CD8-positive, alpha-beta T cell (primary cell): ENCODE measurements at regions of chr16 and their contacts with region 1.

Region 1: DNA sequence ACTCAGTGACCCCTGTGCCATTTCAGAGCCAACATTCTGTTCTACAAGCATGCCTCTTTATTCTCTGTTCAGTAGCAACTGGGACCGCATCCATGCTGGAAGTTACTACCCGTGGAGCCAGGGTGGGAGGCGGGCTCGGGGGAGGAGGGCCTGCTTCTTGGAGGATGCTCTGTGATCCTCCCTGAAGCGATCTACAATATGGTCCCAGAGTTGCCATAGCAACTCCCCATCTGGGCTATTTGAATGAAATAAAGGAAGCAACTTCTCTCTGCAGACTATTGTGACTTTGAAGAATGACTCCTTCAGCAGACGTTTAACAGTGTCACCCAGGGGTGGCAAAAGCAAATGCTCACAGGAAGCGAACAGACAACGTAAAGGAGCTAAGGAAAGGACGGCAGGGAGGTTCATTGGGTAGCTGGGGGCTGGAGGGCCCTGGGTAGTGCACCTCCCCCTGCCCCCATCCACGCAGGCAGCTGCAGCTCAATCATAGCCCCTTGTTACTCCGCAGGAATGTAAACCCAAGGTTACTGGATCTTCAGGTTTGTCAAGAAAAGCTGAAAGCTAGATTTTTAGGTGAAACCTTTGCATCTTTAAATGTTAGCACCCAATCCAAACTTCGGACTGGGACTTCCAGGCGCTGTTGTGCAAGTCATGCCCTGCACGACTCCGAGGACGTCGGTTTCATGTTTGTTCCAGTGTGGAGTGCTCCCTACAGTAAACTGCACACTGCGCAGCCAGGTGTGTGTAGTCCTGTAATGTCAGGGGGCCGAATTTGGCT is 51.1 kb upstream of the MEAK7 start:
- DNase-seq: peak in 2 of 9 experiments; percentile 12 to 48
- ATAC-seq: no peak
- H3K4me3 ChIP-seq: no peak overlapping the region
- H3K4me3 Mint-ChIP-seq: no peak overlapping the region
- H3K27ac ChIP-seq: peak overlapping the region in 1 of 2 experiments; percentile 63
- H3K27ac Mint-ChIP-seq: no peak overlapping the region
- H3K4me1 ChIP-seq: peaks cover 41% of the 10 kb centered on the region
- H3K4me1 Mint-ChIP-seq: peaks cover 41% of the 10 kb centered on the region
- H3K27me3 ChIP-seq: no peaks in the 10 kb centered on the region
- H3K27me3 Mint-ChIP-seq: no peaks in the 10 kb centered on the region
- CTCF ChIP-seq: no peak

Region 2: GRCh38 chr16:84368308-84368996 is 187.2 kb before region 1 on chr16 and contains the start of gene ATP2C2:
- CTCF ChIA-PET with region 1: no interaction called
- POLR2A ChIA-PET with region 1: no interaction called
- intact Hi-C with region 1: no loop called
- DNase-seq: no peak
- ATAC-seq: no peak
- H3K4me3 ChIP-seq: no peak within 1 kb of the TSS
- H3K4me3 Mint-ChIP-seq: no peak within 1 kb of the TSS
- H3K27ac ChIP-seq: no peak within 1 kb of the TSS
- H3K27ac Mint-ChIP-seq: no peak within 1 kb of the TSS
- H3K4me1 ChIP-seq: peaks cover 11% of the 10 kb centered on the region
- H3K4me1 Mint-ChIP-seq: peaks cover 5% of the 10 kb centered on the region
- H3K27me3 ChIP-seq: peaks cover 0 to 8% of the 10 kb centered on the region in 2 experiments
- H3K27me3 Mint-ChIP-seq: peaks cover 49% of the 10 kb centered on the region
- CTCF ChIP-seq: no peak
- total RNA-seq, gene ATP2C2: not detected

Region 3: DNA sequence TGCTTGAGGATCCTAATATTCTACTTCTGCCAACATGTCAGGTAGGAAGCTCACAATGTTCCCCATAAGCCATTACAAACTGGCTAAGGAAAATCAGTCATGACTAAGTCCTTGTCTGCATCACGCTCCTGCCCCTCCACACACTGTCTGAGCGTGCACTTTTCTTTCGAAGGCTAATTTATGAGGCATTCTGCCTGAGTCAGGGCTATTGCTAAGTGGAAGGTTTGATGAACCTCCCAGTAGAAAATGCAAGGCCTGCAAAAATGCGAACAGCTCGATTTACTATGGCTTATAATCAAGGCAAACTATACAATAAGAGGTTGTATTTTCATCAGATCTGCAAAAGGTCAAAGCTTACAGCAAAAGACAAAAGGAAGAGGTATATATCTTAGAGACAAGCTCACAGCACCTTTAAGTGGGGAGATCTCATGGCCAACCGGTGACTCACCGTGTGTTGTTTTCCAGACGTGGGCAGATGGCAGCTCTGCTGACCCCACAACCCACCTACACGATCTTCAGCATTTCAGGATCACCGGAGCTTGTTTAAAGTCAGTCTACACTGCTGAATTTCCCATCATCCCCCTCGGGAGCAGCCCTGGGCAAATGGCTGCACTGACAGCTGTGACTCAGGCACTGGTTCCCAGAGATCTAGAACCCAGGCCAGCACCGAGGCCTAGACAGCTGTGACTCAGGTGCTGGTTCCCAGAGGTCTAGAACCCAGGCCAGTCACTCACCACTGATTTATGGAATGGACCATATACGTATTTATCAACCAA is 77.2 kb before region 1 on chr16:
- CTCF ChIA-PET with region 1: no interaction called
- POLR2A ChIA-PET with region 1: no interaction called
- intact Hi-C with region 1: no loop called
- DNase-seq: peak in 1 of 9 experiments; percentile 29
- ATAC-seq: no peak
- H3K4me3 ChIP-seq: no peak overlapping the region
- H3K4me3 Mint-ChIP-seq: no peak overlapping the region
- H3K27ac ChIP-seq: no peak overlapping the region
- H3K27ac Mint-ChIP-seq: no peak overlapping the region
- H3K4me1 ChIP-seq: no peaks in the 10 kb centered on the region
- H3K4me1 Mint-ChIP-seq: peaks cover 2% of the 10 kb centered on the region
- H3K27me3 ChIP-seq: no peaks in the 10 kb centered on the region
- H3K27me3 Mint-ChIP-seq: no peaks in the 10 kb centered on the region
- CTCF ChIP-seq: no peak

Region 4: GRCh38 chr16:84593825-84594724 is 38.5 kb after region 1 on chr16:
- CTCF ChIA-PET with region 1: interaction called, 4 read pairs
- POLR2A ChIA-PET with region 1: interaction called, 8 read pairs
- intact Hi-C with region 1: loop called in 1 of 2 experiments (anchors 5 kb)
- DNase-seq: peak; percentile 69 to 98 (median 84)
- ATAC-seq: peak; percentile 85
- H3K4me3 ChIP-seq: peak overlapping the region; percentile 37 to 46
- H3K4me3 Mint-ChIP-seq: peak overlapping the region; percentile 83
- H3K27ac ChIP-seq: peak overlapping the region; percentile 75 to 94
- H3K27ac Mint-ChIP-seq: peak overlapping the region; percentile 98
- H3K4me1 ChIP-seq: peaks cover 59% of the 10 kb centered on the region
- H3K4me1 Mint-ChIP-seq: peaks cover 72% of the 10 kb centered on the region
- H3K27me3 ChIP-seq: no peaks in the 10 kb centered on the region
- H3K27me3 Mint-ChIP-seq: no peaks in the 10 kb centered on the region
- CTCF ChIP-seq: no peak

Region 5: DNA sequence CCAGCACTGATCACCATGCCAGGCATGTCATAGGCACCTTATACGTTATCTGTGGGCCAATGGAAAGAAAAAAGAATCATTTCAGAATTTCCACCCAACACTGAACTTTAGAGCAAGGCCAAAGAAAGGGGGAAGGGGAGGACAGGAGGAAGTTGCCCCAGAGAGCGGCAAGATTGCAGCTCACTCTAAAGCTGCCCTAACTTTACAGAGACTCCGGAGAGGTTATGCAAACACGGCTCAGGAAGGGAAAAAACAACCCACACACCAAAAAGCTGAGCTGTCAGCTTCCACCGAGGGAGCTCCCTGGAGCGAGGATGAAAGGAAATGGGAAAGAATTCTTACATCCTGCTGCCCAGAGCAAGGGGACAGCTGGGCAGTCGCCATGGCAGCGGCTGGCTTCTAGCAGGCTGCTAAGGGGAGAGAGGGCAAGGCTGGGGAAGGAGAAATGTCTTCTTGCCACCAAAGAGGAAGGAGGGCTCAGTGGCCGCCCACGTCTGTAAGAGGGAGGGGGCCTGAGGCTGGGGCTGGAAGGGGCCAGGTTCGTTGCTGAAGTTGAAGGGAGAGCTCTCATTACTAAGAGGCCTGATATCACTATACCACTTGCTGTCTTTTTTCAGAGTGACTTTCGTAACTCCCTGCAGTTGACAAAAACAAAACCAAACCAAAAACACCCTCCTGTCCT is 44.1 kb after region 1 on chr16:
- CTCF ChIA-PET with region 1: interaction called, 4 read pairs
- POLR2A ChIA-PET with region 1: interaction called, 8 read pairs
- intact Hi-C with region 1: loop called (anchors 2 to 5 kb)
- DNase-seq: peak in 6 of 9 experiments; percentile 51 to 77 (median 62)
- ATAC-seq: peak; percentile 23
- H3K4me3 ChIP-seq: peak overlapping the region; percentile 39
- H3K4me3 Mint-ChIP-seq: peak overlapping the region; percentile 80
- H3K27ac ChIP-seq: peak overlapping the region; percentile 34 to 80
- H3K27ac Mint-ChIP-seq: peak overlapping the region; percentile 97
- H3K4me1 ChIP-seq: peaks cover 91% of the 10 kb centered on the region
- H3K4me1 Mint-ChIP-seq: peaks cover 91% of the 10 kb centered on the region
- H3K27me3 ChIP-seq: no peaks in the 10 kb centered on the region
- H3K27me3 Mint-ChIP-seq: no peaks in the 10 kb centered on the region
- CTCF ChIP-seq: no peak